ENCODE measurements at regions of chr7 and their contacts with region 1.

Region 1: DNA sequence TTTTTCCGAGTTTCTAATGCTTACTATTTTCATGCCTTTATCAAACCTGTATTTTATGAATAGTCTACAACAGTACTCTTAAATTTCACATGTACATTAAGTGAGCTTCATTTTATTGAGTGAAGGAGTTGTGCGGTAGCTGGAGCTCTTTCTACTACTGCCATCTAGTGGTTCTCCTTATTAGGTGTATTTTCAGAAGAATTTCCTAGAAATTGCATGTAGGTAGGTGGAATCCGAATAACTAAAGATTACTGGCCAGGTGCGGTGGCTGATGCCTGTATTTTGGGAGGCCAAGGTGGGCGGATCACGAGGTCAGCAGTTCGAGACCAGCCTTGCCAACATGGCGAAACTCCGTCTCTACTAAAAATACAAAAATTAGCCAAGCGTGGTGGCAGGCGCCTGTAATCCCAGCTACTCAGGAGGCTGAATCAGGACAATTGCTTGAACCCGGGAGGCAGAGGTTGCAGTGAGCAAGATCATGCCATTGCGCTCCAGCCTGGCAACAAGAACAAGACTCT is 38.3 kb downstream of the LRRC72 start:
- DNase-seq: no peak
- H3K4me3 Mint-ChIP-seq: no peak overlapping the region
- H3K27ac Mint-ChIP-seq: no peak overlapping the region
- H3K4me1 Mint-ChIP-seq: peaks cover 13% of the 10 kb centered on the region
- H3K27me3 Mint-ChIP-seq: peaks cover 3% of the 10 kb centered on the region

Region 2: DNA sequence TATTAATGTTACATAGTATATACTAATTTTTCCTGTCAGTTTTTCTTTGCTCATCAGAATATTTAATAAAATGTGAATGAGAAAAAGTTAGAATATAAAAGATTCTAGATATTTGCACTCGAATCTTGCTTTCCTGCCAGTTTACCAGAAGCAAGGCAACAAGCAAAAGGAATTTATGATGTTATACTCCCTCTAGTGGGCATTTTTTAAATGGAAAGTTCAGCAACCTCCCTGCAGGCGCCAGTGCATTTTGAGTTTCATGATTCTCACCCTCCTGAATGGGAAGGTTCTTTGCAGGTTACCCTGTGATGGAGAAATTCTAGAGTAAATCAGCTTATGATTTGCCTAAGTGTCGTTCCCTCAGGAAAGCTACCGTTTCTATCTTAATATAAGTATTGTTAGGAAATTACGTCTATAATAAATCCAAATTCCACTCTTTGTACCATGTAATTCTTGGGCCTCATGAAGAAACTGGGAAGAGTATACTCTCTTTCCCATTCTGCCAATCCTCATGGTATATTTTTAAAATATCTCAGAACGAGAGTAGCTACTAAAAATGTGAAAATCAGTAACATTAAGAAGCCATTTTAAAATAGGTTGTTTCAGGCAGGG is 493.6 kb before region 1 on chr7:
- CTCF ChIA-PET with region 1: interaction called, 13 read pairs
- POLR2A ChIA-PET with region 1: no interaction called
- DNase-seq: no peak
- H3K4me3 Mint-ChIP-seq: no peak overlapping the region
- H3K27ac Mint-ChIP-seq: no peak overlapping the region
- H3K4me1 Mint-ChIP-seq: no peaks in the 10 kb centered on the region
- H3K27me3 Mint-ChIP-seq: no peaks in the 10 kb centered on the region

Region 3: DNA sequence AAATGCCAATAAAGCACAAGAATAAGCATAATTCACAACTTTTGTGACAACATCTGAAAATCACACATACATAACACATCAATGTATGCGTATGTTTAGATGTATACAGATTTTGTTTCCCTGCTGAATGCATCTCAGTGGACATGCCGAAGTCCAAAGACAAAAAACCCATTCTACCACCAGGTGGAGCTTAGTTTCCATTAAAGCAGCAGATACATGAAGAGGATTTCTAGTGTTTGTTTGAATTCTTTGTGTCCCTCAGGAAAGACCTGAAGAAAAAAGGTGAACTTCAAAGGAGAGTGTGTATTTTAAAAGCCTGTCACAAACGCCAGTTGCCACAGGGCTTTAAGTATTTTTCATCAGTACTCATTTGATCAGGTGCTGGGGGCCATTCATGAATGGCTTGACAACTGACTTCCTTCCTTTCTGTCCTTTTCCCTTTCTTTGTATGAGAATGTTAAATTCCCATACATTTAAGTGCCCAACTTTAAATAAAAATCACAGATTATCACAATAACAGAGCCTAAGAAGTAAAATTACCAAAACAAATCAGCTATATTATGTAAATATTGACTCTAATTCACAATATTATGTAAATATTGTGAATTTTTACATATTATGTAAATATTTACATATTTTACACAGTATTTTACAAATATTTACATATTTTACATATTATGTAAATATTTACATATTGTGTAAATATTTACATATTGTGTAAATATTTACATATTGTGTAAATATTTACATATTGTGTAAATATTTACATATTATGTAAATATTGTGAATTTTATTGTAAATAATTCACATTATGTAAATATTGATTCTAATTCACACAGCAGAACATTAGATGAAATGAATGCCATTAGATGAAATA is 486.7 kb before region 1 on chr7:
- CTCF ChIA-PET with region 1: interaction called, 29 read pairs
- POLR2A ChIA-PET with region 1: no interaction called
- DNase-seq: no peak
- H3K4me3 Mint-ChIP-seq: no peak overlapping the region
- H3K27ac Mint-ChIP-seq: no peak overlapping the region
- H3K4me1 Mint-ChIP-seq: no peaks in the 10 kb centered on the region
- H3K27me3 Mint-ChIP-seq: no peaks in the 10 kb centered on the region

Region 4: DNA sequence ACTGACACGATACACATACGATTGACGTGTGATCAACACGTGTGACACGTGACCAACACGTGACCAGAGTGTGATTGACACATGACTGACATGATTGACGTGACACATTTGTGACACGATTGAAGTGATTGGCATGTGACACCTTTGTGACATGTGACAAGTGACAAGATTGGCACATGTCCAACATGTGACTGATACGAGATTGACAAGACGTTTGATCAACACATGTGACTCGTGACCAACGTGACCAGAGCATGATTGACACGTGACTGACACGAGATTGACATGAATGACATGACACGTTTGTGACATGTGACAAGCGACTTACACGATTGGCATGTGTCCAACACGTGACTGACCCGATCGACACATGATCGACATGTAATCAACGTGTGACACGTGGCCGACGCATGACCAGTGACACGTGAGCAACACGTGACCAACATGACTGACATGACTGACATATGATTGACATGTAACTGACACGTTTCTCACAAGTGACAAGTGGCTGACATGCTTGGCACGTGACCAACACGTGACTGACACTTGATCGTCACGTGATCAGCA is 165.6 kb before region 1 on chr7:
- CTCF ChIA-PET with region 1: no interaction called
- POLR2A ChIA-PET with region 1: no interaction called
- DNase-seq: no peak
- H3K4me3 Mint-ChIP-seq: no peak overlapping the region
- H3K27ac Mint-ChIP-seq: no peak overlapping the region
- H3K4me1 Mint-ChIP-seq: no peaks in the 10 kb centered on the region
- H3K27me3 Mint-ChIP-seq: no peaks in the 10 kb centered on the region

Region 5: DNA sequence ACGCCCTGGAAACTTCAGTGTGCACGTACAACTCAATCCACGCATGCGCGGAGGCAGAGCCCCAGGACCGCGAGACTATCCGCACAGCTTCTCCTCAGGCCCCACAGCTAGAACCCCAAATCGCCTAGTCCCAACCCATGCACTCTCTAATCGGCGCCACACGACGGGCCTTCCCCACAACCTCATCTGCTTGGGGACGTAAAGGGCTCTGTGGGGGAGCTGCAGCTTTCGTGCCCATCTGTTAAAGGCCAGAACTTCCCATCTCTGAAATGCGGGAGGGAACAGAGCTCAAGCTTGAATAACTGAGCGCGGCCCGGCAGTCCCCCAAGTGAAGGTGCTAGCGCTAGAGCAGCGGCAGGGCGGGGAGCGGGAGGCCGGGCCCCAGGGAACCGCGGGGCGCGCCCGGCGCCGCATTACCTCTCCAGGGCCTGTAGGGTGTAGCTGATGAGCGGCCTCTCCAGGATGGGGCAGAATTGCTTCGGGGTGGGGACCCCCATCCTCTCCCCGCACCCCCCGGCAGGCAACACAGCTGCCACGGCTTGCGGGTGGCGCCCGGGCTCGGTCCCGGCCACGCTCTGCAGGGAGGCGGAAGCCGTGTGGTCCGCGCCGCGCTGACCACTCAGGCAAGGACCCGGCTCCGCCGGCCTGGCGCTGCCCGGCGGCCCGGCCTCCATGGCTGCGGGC is 144.2 kb before region 1 on chr7:
- CTCF ChIA-PET with region 1: interaction called, 27 read pairs
- POLR2A ChIA-PET with region 1: interaction called, 3 read pairs
- DNase-seq: peak; percentile 87
- H3K4me3 Mint-ChIP-seq: peak overlapping the region; percentile 77
- H3K27ac Mint-ChIP-seq: peak overlapping the region; percentile 92
- H3K4me1 Mint-ChIP-seq: peaks cover 26% of the 10 kb centered on the region
- H3K27me3 Mint-ChIP-seq: no peaks in the 10 kb centered on the region

Region 6: DNA sequence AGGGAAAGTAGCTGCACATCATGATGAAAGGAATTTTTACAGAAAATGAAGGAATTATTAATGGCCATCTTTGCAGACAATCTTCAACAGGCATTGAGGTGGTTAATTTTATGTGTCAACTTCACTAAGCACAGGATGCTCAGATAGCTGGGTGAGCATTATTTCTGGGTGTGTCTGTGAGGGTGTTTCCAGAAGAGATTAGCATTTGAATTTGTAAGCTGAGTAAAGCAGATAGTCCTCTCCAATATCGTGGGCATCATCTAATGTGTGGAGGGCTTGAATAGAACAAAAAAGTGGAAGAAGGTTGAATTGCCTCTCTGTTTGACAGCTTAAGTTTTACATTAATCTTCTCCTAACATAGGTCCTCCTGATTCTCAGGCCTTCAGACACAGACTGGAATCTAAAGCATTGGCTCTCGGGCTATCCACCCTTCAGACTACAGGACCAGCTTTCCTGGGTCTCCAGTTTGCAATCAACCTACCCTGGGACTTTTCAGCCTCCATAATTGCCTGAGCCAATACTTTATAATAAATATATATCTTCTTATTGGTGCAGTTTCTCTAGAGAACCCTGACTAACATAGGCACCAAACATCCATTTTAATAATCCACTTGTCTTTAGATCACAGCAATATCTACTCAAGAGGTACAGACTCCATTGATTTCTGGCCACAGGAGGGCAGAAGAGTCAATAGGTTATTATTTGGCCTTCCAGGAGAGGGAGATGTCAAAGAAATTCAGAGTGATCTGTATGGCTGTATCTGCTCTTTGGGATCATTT is 133.1 kb before region 1 on chr7:
- CTCF ChIA-PET with region 1: interaction called, 66 read pairs
- POLR2A ChIA-PET with region 1: no interaction called
- DNase-seq: peak; percentile 22
- H3K4me3 Mint-ChIP-seq: no peak overlapping the region
- H3K27ac Mint-ChIP-seq: no peak overlapping the region
- H3K4me1 Mint-ChIP-seq: no peaks in the 10 kb centered on the region
- H3K27me3 Mint-ChIP-seq: no peaks in the 10 kb centered on the region

Region 7: DNA sequence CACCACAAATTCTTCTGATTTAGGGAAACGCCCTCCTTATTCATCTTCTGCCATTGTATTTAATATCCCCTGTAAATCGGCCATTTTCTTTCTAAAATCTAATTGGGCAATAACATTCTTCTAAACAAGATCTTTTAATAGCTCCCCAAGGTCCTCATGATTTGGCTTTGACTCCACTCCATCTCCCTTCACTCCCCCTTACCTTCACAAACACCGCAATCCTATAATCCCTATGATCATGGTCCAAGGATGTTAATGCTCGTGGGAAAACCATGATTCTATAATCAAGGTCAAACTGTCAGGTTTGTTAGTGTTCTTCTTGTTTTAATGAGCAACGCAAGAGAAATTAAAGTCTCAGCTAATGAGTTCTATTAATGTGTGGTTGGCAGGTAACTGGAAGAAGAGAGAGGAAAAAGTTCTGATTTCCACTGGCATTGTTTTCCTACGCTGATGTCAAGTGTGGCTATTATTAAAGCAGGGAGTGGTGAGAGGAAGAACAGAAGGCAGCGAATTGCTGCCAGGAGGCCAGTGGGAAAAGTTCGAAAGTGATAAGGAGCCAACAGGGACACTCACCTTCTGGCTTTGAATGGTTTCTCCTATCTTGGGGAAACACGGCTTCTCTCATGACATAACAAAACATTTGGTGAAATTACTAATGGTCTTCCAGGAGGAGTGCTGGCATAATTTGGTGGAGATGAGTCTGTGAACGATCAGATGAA is 10.3 kb before region 1 on chr7:
- CTCF ChIA-PET with region 1: interaction called, 12 read pairs
- POLR2A ChIA-PET with region 1: no interaction called
- DNase-seq: no peak
- H3K4me3 Mint-ChIP-seq: no peak overlapping the region
- H3K27ac Mint-ChIP-seq: no peak overlapping the region
- H3K4me1 Mint-ChIP-seq: no peaks in the 10 kb centered on the region
- H3K27me3 Mint-ChIP-seq: peaks cover 10% of the 10 kb centered on the region

Region 8: DNA sequence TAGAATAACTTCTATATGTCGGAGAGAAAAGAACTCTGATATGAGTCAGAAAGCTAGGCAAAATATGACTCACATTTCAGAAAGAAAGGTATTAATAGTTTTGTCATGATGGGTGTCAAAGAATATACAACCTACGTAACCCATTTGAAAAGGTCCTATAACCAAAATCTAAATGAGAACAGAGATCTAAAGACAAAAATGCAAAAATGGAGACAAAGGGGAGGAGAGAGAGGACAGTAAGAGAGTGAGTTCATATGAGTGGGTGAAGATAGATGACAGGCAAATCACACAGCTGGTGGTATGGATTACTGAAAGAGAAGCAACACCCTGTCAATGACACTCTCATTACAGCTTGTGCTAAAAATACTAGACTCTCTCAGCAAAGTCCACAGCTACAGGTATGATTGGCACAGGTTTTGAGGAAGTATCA is 55.0 kb after region 1 on chr7:
- CTCF ChIA-PET with region 1: no interaction called
- POLR2A ChIA-PET with region 1: no interaction called
- DNase-seq: no peak
- H3K4me3 Mint-ChIP-seq: no peak overlapping the region
- H3K27ac Mint-ChIP-seq: peak overlapping the region; percentile 12
- H3K4me1 Mint-ChIP-seq: peaks cover 13% of the 10 kb centered on the region
- H3K27me3 Mint-ChIP-seq: no peaks in the 10 kb centered on the region

Region 9: DNA sequence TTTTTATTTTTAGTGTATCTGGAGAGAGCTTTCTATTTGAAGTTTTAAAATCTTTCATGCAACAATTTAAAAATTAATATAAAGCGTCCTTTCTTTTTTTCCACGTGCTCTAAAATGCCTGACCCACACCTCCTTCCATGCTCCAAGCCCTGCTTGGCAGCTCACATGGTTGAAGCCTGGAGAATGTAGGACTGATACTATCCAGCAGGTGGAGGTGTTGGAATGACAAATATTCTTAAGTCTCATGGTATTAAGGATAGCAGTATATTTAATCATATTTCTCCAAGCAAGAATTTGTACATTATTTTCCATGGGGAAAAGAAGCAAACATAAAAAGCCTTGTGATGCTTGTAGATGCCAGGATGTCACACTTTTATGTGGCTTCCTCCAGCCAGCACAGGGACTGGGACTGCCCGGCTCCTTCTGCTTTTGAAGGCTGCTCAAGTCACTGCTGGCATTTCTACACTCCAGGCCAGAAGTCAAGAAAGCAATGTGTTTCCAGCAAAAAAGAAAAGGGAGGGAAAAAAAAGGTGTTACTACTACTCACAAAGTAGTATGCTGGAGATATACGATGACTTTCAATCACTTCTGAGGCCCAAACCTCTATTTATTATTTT is 130.8 kb after region 1 on chr7:
- CTCF ChIA-PET with region 1: no interaction called
- POLR2A ChIA-PET with region 1: no interaction called
- DNase-seq: no peak
- H3K4me3 Mint-ChIP-seq: no peak overlapping the region
- H3K27ac Mint-ChIP-seq: no peak overlapping the region
- H3K4me1 Mint-ChIP-seq: no peaks in the 10 kb centered on the region
- H3K27me3 Mint-ChIP-seq: no peaks in the 10 kb centered on the region

Region 10: GRCh38 chr7:16847366-16847864 is 282.4 kb after region 1 on chr7:
- CTCF ChIA-PET with region 1: no interaction called
- POLR2A ChIA-PET with region 1: no interaction called
- DNase-seq: no peak
- H3K4me3 Mint-ChIP-seq: no peak overlapping the region
- H3K27ac Mint-ChIP-seq: no peak overlapping the region
- H3K4me1 Mint-ChIP-seq: no peaks in the 10 kb centered on the region
- H3K27me3 Mint-ChIP-seq: peaks cover 39% of the 10 kb centered on the region

Measured in activated CD4-positive, alpha-beta memory T cell treated with anti-CD3 and anti-CD28 coated beads, Interleukin-2, amount 10 ng/mL, durations not matched to agents 7 days and 5 days (primary cell).